Heart right ventricle (tissue), 16 donors: ENCODE measurements at regions of chr11 and their contacts with region 1.

Region 1: DNA sequence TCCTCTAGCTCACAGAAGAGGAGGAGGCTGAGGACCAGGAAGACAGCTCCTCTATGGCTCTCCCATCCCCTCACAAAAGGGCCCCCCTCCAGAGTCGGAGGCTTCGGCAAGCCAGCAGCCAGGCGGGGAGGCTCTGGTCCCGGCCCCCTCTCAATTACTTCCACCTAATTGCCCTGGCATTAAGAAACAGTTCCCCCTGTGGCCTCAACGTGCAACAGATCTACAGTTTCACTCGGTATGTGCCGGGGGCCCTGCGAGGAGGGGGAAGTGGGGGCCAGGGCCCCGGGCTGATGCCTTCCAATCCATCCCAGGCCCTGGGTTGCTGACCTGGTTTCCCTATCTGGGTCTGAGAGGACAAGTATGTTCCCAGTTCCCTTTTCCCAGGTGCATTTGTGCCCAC is 7.9 kb downstream of the FOXR1 start:
- DNase-seq: no peak
- ATAC-seq: no peak
- H3K4me3 ChIP-seq: no peak overlapping the region
- H3K27ac ChIP-seq: no peak overlapping the region
- H3K4me1 ChIP-seq: peaks cover 0 to 17% (median 6%) of the 10 kb centered on the region in 9 donors
- H3K27me3 ChIP-seq: no peaks in the 10 kb centered on the region
- CTCF ChIP-seq: no peak

Region 2: DNA sequence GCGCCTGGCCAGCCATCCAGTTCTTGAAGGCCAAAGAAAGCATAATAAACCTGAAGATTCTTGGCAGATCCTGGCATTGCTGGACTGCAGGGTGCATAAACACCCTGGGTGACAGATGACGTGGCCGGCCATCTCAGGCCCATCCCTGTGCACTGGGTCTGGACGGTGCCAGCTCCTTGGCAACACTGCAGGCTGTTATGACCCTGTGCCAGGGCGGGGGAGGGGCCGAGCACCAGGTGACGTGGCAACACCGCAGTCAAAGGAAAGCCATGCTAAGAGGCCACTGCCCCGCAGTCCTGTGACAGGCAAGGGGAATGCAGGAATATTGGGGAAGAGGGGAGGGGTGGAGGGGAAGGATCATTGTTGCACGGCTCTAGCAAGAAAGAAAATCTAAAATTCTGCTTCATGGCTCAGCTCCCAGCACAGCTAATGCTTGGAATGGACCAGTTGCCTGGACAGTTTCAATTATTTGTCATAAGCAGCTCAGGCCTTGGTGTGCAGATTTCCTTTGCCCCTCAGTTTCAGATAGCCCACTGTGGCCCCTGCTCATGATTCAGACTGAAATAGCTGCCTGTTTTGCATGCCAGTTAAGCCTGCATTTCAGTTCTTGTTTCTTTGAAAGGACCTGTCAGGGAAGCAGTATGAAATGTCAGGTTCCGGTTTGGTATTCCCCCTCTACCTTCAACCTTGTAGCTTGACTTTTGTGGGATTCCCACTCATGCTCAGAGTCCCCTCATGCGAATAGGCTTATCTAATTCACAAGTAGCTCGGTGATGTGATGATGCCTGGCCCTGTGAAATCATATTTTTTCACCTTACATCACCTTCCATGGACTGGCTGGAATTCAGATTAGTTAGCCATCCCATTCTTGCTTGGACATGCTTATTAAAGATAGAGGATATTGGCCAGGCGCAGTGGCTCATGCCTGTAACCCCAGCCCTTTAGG is 158.7 kb before region 1 on chr11:
- intact Hi-C with region 1: loop called in 1 of 10 experiments (anchors 10 kb)
- DNase-seq: peak; percentile 77 to 79
- ATAC-seq: peak; percentile 90 to 100 (median 99)
- H3K4me3 ChIP-seq: no peak overlapping the region
- H3K27ac ChIP-seq: peak overlapping the region; percentile 6 to 84 (median 68)
- H3K4me1 ChIP-seq: peaks cover 0 to 6% (median 0%) of the 10 kb centered on the region in 9 donors
- H3K27me3 ChIP-seq: no peaks in the 10 kb centered on the region
- CTCF ChIP-seq: no peak

Region 3: GRCh38 chr11:119306373-119306890 is 327.0 kb after region 1 on chr11:
- intact Hi-C with region 1: no loop called
- DNase-seq: no peak
- ATAC-seq: peak; percentile 59 to 73 (median 67)
- H3K4me3 ChIP-seq: no peak overlapping the region
- H3K27ac ChIP-seq: peak overlapping the region in 9 of 10 donors; percentile 4 to 67 (median 46)
- H3K4me1 ChIP-seq: peaks cover 0 to 24% (median 8%) of the 10 kb centered on the region in 9 donors
- H3K27me3 ChIP-seq: no peaks in the 10 kb centered on the region
- CTCF ChIP-seq: no peak